ENCODE measurements at regions of chr1 and their contacts with region 1.

Region 1: GRCh38 chr1:64584479-64584878 is 114.5 kb downstream of the CACHD1 start:
- DNase-seq: no peak
- H3K4me3 ChIP-seq: no peak overlapping the region
- H3K27ac ChIP-seq: no peak overlapping the region
- H3K4me1 ChIP-seq: peaks cover 0 to 5% (median 0%) of the 10 kb centered on the region in 4 donors
- H3K27me3 ChIP-seq: no peaks in the 10 kb centered on the region
- CTCF ChIP-seq: peak; percentile 31 to 62 (median 54)
- EP300 ChIP-seq: no peak
- POLR2A ChIP-seq: no peak

Region 2: DNA sequence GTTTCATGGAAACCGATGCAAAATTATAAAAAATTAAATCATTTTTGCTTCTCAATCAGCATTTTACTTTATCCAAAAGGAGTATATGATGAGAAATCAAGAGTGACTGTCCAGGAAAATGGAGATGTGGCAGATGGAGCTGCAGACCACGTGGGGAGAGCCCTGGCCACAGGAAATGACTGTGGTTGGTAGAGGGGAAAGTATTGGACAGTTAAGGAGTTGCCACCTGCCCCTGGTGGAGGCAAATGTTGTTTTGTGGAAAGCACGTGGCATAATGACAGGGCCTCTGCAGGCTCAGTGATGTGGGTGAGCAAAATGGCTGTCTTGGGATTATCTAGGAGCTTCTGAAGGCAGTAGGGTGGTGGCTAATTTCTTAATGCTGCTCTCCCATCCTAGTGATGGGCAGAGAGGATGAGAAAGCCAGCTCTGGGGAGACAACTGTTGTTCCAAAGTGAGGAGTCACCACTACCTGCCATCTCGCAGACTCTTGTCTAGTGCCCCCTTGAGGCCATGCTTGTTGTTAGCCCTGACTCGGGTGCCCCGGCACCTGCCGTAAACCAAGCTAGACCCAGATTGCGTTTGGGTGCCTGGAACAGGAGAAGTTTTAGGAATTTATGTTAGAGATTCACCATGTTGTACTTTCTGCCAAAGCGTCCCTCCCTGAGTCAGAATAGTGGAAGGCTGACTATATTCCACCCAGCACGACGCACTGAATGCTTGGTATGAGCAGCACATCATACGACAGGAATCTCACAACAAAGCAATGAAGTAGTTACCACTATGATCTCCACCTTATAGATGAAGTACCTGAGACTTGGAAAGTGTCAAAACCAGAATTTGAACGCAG is 666.7 kb before region 1 on chr1:
- in situ Hi-C with region 1: no loop called
- intact Hi-C with region 1: no loop called
- DNase-seq: no peak
- H3K4me3 ChIP-seq: no peak overlapping the region
- H3K27ac ChIP-seq: no peak overlapping the region
- H3K4me1 ChIP-seq: peaks cover 12 to 41% (median 34%) of the 10 kb centered on the region in 4 donors
- H3K27me3 ChIP-seq: no peaks in the 10 kb centered on the region
- CTCF ChIP-seq: peak in 1 of 5 experiments; percentile 8
- EP300 ChIP-seq: no peak
- POLR2A ChIP-seq: no peak

Region 3: DNA sequence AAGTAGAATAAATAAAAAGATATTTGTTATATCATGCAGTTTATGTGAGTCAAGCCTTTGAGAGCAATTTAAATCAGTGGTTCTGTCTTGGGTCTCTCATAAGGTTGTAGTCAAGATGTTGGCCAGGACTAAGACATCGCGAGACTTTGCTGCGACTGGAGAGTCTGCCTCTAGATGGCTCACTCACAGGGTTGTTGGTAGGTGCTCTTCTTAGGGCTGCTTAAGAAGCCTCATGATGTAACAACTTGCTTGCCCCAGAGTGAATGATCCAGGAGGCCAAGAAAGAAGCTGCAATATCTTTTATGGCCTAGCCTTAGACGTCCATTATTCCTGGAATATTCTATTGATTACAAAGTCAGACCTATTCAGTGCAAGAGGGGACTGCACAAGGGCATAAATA is 187.7 kb before region 1 on chr1:
- in situ Hi-C with region 1: no loop called
- intact Hi-C with region 1: loop called (anchors 5 kb)
- DNase-seq: no peak
- H3K4me3 ChIP-seq: no peak overlapping the region
- H3K27ac ChIP-seq: no peak overlapping the region
- H3K4me1 ChIP-seq: no peaks in the 10 kb centered on the region
- H3K27me3 ChIP-seq: no peaks in the 10 kb centered on the region
- CTCF ChIP-seq: no peak
- EP300 ChIP-seq: no peak
- POLR2A ChIP-seq: no peak